ENCODE measurements at regions of chr12 and their contacts with region 1.

Region 1: DNA sequence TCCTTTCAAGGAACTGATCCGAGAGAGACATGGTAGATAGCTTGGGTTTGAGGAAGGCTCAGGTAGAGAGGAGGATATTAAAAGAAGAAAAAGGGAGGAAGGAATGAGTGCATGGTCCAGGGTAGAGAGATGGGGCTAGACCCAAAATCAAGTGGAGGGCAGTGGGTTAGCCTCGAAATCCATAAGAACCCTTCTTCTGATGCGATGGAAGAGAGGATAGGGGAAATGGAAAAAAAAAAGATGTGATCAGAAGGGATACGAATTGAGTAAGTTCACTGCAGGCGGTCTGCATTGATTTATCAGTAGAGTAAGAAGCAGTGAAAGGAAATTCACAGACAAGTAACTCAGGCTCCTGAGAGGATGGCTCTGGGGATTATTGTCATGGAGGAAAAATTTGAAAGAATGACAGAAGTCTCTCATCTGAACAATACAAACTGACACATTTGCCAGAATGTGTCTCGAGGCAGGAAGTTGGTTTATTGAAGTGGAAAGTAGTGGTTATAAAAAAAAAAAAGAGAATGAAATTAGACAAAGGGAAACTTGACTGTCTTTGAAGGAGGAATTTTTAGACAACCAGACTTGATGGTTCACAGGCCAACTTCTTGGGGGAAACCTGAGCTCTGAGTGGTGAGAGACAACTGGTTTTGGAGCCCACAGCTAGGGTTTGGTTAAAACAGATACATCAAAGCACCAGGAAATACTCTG is 10.2 kb downstream of the PPFIBP1 start:
- DNase-seq: no peak
- H3K4me3 ChIP-seq: no peak overlapping the region
- H3K27ac ChIP-seq: peak overlapping the region in 8 of 59 donors; percentile 1 to 24 (median 8)
- H3K27me3 ChIP-seq: no peaks in the 10 kb centered on the region
- CTCF ChIP-seq: no peak

Region 2: DNA sequence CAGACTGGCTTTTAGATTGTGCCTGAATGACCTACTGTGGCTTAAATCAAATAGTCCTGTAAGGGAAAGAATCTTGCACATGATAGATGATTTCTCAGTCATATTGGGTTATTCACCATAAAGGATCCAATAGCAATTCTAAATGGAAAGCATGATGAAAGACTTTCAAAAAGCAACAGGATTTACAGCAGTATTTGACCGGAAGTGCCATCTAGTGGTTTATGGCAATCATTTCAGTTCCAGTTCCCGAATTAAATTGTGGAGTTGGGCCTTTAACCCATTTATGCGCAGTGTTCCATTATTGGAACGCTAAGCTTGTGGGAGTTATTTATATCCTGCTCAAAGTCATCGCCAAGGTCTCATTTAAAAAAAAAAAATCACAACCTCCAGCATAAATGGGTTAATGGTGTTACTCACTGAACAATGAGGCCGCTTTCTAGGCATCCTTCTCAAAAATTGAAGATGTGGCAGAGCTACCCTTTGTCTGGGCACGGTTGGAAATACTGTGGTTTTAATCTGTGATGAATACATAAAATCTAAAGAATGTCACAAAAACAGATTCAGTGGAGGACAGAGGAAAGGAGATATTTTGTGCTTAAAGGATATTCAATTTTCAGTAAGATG is 101.2 kb after region 1 on chr12:
- intact Hi-C with region 1: loop called (anchors 2 to 5 kb)
- DNase-seq: no peak
- H3K4me3 ChIP-seq: no peak overlapping the region
- H3K27ac ChIP-seq: peak overlapping the region in 12 of 59 donors; percentile 7 to 51 (median 16)
- H3K27me3 ChIP-seq: no peaks in the 10 kb centered on the region
- CTCF ChIP-seq: peak; percentile 54 to 88 (median 76)